HCT116 (cell line): ENCODE measurements at regions of chrX and their contacts with region 1.

Region 1: DNA sequence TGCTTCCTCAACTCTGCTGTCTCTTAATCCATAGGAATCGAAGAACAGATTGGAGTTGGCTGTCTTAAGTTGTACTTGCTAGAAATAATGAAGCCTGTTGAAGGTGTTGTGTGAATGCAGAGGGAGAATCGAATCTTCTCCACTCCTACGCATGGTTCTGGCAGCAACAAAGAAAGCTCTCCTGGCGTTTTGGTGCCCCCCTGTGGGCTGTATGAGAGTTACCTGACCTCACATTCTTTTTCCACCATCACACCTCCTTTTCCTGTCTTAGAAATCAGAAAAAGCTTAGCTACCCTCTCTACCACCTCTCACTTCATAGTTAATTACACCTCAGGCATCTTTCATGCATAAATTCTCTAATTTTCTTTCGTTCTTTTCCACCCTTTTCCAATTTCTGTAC is 16.3 kb downstream of the KLF8 start:
- DNase-seq: peak; percentile 21
- ATAC-seq: peak; percentile 77
- H3K4me3 ChIP-seq: no peak overlapping the region
- H3K27ac ChIP-seq: no peak overlapping the region
- H3K4me1 ChIP-seq: no peaks in the 10 kb centered on the region
- H3K27me3 ChIP-seq: no peaks in the 10 kb centered on the region
- CTCF ChIP-seq: peak; percentile 46 to 59 (median 58)
- POLR2A ChIP-seq: no peak
- RAD21 ChIP-seq: peak; percentile 82

Region 2: DNA sequence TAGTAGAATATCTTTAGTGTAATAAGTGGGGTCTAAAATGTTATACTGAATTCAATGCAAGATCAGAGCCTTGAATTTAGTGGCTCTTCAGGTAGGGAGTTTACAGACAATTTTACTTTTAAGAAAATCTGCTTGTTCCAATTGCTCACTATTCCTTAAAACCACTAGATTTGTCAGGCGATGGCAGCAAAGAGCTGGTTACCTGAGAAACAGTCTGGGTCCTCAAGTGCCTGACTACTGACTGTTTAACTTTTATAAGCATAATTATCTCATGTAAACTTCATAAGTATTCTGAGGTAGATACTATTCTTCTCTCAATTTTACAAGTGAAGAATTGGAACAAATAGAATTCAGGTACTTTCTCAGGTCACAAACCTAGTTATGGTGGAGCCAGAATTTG is 446.7 kb before region 1 on chrX:
- CTCF ChIA-PET with region 1: no interaction called
- POLR2A ChIA-PET with region 1: no interaction called
- RAD21 ChIA-PET with region 1: no interaction called
- intact Hi-C with region 1: loop called (anchors 2 kb)
- DNase-seq: no peak
- ATAC-seq: no peak
- H3K4me3 ChIP-seq: no peak overlapping the region
- H3K27ac ChIP-seq: no peak overlapping the region
- H3K4me1 ChIP-seq: no peaks in the 10 kb centered on the region
- H3K27me3 ChIP-seq: no peaks in the 10 kb centered on the region
- CTCF ChIP-seq: 0 out of 6 replicates have a peak, but pooled peaks of 2 of the 3 experiments have one; percentile 9 to 11
- POLR2A ChIP-seq: no peak
- RAD21 ChIP-seq: peak; percentile 46